PC-9 (cell line): ENCODE measurements at regions of chr1 and their contacts with region 1.

Region 1: DNA sequence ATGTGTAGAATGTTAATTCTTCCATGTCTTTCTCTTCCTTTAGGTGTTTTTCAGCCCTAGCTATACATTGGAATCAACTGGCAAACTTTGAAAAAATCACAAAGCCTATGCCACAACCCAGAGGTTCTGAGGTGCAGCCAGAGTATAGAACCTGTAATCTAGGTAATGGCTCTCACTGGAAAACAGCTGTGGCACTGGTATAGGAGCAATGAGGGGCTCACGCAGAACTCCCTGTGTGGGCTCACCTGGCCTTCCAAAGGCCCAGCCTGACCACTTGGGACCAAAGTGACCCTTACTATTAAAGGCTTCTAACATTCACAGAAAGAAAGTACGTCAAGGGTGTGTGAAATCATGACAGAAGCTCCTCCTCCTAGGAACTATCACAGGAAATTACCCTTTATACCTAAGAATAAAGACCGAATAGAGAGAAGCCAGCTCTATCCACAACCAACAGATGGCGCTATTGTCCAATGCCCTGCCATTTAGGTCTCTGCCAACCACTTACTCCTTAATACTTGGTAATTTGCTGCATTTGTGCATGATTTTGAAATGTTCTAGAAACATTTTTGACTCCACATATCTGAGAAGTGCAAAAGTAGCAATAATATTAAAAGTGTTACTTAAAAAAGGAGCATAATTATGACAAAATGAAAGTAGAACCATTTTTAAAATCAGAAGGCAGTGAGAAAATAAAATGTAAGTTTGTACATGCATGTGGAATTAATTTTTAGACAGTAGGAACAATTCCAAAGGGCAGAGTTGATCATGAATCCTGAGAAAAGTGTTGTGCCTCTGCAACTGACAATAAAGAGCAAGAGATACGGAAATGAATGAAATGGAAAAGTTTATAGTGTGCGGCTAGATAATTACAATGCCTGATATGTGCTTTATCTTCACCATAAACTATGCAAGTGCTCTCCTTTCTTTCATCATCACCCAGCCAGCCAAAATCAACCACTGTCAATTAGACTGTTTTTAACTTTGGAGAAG is 93.1 kb upstream of the HAO2 start:
- DNase-seq: peak; percentile 43 to 59
- H3K4me3 ChIP-seq: no peak overlapping the region
- H3K27ac ChIP-seq: no peak overlapping the region
- H3K4me1 ChIP-seq: peaks cover 17% of the 10 kb centered on the region
- H3K27me3 ChIP-seq: no peaks in the 10 kb centered on the region
- CTCF ChIP-seq: peak; percentile 98

Region 2: DNA sequence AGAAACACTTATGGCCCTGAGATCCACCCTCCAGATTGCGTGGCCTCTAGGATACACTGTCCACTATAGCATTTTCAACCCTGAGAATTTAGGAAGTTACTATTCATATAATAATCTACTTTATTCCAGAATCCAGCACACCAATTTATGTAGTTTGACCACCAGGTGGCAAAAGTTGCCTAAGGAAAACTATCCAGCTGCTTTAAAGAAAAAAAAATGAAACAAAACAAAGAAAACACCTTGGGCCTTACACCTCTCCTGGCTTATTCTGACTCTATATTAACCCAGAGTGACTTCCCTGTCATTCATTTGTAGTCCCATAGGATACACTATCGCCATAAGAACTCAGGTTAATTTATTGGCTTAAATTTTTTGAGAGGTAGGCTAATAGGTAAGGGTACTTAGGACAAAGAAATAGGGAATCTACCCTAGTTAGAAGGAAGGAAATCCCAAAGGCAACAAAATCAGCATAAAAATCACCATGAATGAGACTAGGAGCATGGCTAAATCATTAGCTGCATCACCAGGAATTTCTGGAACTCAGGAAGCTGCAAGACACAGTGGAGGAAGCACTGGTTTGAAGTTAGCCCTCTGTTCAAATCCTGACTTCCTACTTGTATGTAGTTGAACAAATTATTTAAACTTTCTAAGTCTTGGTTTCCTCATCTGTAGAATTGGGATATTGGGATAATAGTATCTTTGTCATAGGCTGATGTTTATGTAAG is 1197.9 kb before region 1 on chr1:
- CTCF ChIA-PET with region 1: interaction called, 3 read pairs
- POLR2A ChIA-PET with region 1: no interaction called
- intact Hi-C with region 1: loop called (anchors 10 kb)
- DNase-seq: peak in 1 of 2 experiments; percentile 2
- H3K4me3 ChIP-seq: no peak overlapping the region
- H3K27ac ChIP-seq: no peak overlapping the region
- H3K4me1 ChIP-seq: no peaks in the 10 kb centered on the region; the same call in 1 of the 2 replicates
- H3K27me3 ChIP-seq: no peaks in the 10 kb centered on the region
- CTCF ChIP-seq: peak; percentile 89

Region 3: GRCh38 chr1:118151312-118151937 is 1124.0 kb before region 1 on chr1:
- CTCF ChIA-PET with region 1: no interaction called
- POLR2A ChIA-PET with region 1: no interaction called
- intact Hi-C with region 1: loop called (anchors 5 kb)
- DNase-seq: peak; percentile 44 to 45
- H3K4me3 ChIP-seq: no peak overlapping the region
- H3K27ac ChIP-seq: no peak overlapping the region
- H3K4me1 ChIP-seq: peaks cover 11% of the 10 kb centered on the region; the same call in 1 of the 2 replicates
- H3K27me3 ChIP-seq: no peaks in the 10 kb centered on the region
- CTCF ChIP-seq: peak; percentile 95

Region 4: GRCh38 chr1:119008483-119009311 is 266.7 kb before region 1 on chr1:
- CTCF ChIA-PET with region 1: no interaction called
- POLR2A ChIA-PET with region 1: no interaction called
- intact Hi-C with region 1: loop called (anchors 10 kb)
- DNase-seq: peak in 1 of 2 experiments; percentile 20
- H3K4me3 ChIP-seq: no peak overlapping the region
- H3K27ac ChIP-seq: no peak overlapping the region
- H3K4me1 ChIP-seq: no peaks in the 10 kb centered on the region
- H3K27me3 ChIP-seq: no peaks in the 10 kb centered on the region
- CTCF ChIP-seq: peak; percentile 85

Region 5: GRCh38 chr1:119140177-119141019 is 135.0 kb before region 1 on chr1 and contains the start of gene WARS2:
- CTCF ChIA-PET with region 1: no interaction called
- POLR2A ChIA-PET with region 1: no interaction called
- intact Hi-C with region 1: loop called (anchors 2 kb)
- DNase-seq: peak; percentile 96 to 98
- H3K4me3 ChIP-seq: peak within 1 kb of the TSS; percentile 75
- H3K27ac ChIP-seq: peak within 1 kb of the TSS; percentile 96
- H3K4me1 ChIP-seq: peaks cover 31% of the 10 kb centered on the region
- H3K27me3 ChIP-seq: no peaks in the 10 kb centered on the region
- CTCF ChIP-seq: no peak
- total RNA-seq, gene WARS2: 17.6 and 24.2 TPM in 2 replicates

Region 6: GRCh38 chr1:119367427-119368124 is 92.1 kb after region 1 on chr1:
- CTCF ChIA-PET with region 1: interaction called, 3 read pairs
- POLR2A ChIA-PET with region 1: no interaction called
- intact Hi-C with region 1: loop called (anchors 1 kb)
- DNase-seq: no peak
- H3K4me3 ChIP-seq: no peak overlapping the region
- H3K27ac ChIP-seq: no peak overlapping the region
- H3K4me1 ChIP-seq: peaks cover 3% of the 10 kb centered on the region; the same call in 1 of the 2 replicates
- H3K27me3 ChIP-seq: no peaks in the 10 kb centered on the region
- CTCF ChIP-seq: peak; percentile 99

Region 7: DNA sequence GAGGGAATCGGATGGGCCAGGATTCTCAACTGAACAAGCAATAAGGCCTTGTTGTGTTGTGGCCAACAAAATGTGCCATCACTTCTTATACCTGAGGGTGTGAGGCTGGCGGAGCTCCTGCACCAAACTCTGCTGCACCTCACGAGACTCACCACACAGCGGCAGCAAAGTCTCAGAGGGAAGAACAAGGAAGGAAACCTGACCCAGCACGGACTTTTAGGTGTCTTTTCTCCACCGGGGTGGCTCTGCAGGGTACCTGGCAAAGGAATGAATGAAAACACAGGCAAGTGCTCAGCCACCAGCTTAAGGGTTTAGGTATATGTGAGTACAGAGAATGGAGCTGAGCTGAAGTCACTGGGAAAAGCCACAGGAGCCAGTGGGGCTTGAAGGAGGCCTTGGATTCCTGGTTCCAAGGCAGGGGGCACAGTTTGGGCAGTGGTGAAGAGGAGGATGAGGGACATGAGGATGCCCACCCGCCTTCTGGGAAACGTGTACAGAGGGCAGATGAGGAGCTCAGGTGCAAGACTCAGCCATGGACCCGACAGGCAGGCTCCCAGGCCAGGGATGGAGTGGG is 200.5 kb after region 1 on chr1:
- CTCF ChIA-PET with region 1: no interaction called
- POLR2A ChIA-PET with region 1: no interaction called
- intact Hi-C with region 1: loop called (anchors 5 kb)
- DNase-seq: peak; percentile 66 to 74
- H3K4me3 ChIP-seq: no peak overlapping the region
- H3K27ac ChIP-seq: no peak overlapping the region
- H3K4me1 ChIP-seq: peaks cover 5% of the 10 kb centered on the region
- H3K27me3 ChIP-seq: peaks cover 4% of the 10 kb centered on the region; the same call in 1 of the 2 replicates
- CTCF ChIP-seq: peak; percentile 95